PC-9 (cell line): ENCODE measurements at regions of chr13 and their contacts with region 1.

Region 1: DNA sequence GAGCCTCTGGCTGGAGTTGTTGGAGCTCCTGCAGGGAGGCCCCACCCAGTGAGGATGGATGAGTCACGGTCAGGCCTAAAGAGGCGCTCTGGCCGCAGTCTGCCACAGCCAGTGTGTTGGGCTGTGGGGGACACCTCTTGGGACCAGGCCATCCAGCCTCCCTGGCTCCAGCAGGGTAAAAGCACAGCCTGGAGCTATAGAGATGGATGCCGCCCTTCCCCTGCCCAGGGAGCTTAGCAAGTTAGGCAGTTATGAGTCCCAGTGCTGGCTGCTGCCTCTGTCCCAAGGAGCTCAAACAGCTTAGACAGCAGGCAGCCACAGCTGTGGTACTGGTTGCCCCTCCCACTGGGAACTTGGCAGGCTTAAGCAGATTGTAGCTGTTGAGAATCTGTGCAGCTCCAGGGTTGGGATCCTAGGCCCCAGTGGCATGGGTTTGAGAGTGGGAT is 100.9 kb downstream of the NDFIP2 start:
- DNase-seq: peak in 1 of 2 experiments; percentile 40
- H3K4me3 ChIP-seq: no peak overlapping the region
- H3K27ac ChIP-seq: no peak overlapping the region
- H3K4me1 ChIP-seq: no peaks in the 10 kb centered on the region
- H3K27me3 ChIP-seq: no peaks in the 10 kb centered on the region
- CTCF ChIP-seq: no peak

Region 2: GRCh38 chr13:79775830-79776229 is 193.9 kb after region 1 on chr13:
- CTCF ChIA-PET with region 1: no interaction called
- POLR2A ChIA-PET with region 1: no interaction called
- intact Hi-C with region 1: no loop called
- DNase-seq: peak; percentile 54 to 66
- H3K4me3 ChIP-seq: no peak overlapping the region
- H3K27ac ChIP-seq: no peak overlapping the region
- H3K4me1 ChIP-seq: peaks cover 18% of the 10 kb centered on the region
- H3K27me3 ChIP-seq: no peaks in the 10 kb centered on the region
- CTCF ChIP-seq: peak; percentile 73

Region 3: DNA sequence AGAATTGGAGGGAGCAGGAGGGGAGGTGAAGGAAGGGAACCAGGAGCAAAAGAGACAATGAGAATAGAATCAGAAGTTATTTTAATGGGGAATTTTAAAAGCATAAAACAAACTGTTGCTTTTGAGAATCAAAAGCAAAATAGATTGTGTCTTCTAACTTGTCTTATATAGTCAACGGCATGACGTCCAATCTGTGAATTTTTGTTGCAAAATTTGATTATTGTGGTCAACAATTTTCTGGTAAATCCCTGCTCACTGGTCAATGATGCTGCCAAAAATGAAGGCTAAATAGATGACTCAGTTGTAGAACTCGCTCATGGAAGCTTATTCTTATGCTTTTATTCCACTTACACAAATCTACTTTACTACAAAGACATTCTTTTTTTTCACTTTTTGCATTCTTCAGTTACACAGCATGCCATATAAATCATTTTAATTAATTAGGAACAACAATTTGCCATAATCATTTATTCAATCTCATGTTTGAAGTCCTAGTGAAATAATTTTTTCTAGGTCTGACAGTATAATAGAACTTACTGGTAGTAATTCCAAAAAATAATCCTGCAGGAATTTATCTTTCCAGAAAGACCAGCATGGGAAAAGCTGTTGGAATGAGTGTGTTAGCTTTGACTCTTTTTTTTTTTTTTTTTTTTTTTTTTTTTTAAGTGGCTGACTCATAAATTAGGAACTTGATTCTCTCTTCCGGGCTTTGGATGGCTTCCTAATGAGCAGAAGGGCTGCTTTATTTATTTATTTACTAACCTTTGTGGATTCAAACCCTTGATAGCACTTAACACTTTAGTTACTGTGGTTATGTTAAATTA is 502.2 kb after region 1 on chr13:
- CTCF ChIA-PET with region 1: no interaction called
- POLR2A ChIA-PET with region 1: interaction called, 10 read pairs
- intact Hi-C with region 1: no loop called
- DNase-seq: peak in 1 of 2 experiments; percentile 82
- H3K4me3 ChIP-seq: no peak overlapping the region
- H3K27ac ChIP-seq: peak overlapping the region; percentile 43; the same call in 1 of the 2 replicates
- H3K4me1 ChIP-seq: peaks cover 53% of the 10 kb centered on the region
- H3K27me3 ChIP-seq: no peaks in the 10 kb centered on the region
- CTCF ChIP-seq: no peak